ENCODE measurements at regions of chr6 and their contacts with region 1.

Region 1: DNA sequence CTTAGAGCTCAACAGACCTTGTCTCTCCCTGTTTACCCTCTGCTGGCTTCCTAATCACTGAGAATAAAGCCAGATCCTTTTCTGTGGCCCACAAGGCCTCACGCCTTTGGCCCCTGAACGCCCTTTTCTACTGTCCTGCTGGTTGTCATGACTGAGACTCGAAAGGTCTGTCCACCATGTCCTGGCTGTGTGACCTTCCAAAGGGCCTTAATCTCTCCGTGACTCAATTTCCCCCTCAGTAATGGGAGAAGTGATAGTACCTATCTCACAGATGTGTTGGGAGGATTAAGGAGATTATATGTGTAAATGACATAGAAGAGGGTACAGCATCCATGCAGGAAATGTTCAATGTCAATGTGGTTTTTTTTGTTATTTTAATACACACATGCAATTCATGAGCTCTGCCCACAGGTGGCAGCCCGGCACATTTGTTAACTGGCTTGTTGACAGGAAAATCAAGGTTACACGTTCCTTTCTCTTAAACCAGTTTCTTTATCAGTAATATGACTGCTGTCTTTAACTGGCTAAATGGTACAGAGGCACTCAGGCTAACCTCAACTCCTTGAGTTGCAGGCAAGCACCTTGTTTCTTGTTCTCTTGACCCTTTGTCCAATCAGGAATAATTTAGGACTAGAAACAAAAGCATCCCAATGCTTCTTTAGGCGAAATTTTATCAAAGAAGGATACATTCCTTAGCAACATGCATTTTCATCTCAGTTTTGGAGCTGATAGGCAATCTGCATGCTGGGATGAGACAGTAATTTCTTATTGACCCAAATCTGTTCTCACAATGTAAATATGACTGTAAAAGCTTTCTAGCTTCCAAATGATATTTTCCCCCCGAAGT is 16.6 kb downstream of the SLC22A1 start:
- DNase-seq: peak; percentile 64

Region 2: DNA sequence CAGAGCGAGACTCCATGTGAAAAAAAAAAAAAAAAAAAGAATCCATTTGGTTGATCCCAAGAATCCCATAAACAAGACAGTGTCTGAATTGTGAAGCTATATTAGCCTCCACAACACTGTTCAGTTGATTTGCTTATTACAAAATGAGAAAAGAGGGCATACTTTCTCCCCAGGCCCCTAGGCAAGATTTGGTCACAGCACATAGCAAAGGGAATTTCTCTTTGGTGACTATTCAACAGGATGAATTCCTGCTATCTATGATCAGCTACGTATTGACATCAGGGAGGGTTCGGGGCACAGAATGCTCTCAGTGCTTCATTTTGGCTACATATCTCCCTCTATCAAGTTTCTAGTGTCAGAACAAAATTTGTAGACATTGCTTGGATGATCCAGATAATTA is 189.8 kb after region 1 on chr6:
- CTCF ChIA-PET with region 1: interaction called, 11 read pairs
- POLR2A ChIA-PET with region 1: no interaction called
- DNase-seq: no peak

Region 3: GRCh38 chr6:160510199-160510598 is 372.0 kb after region 1 on chr6:
- CTCF ChIA-PET with region 1: no interaction called
- POLR2A ChIA-PET with region 1: no interaction called
- DNase-seq: no peak